Activated CD8-positive, alpha-beta memory T cell treated with anti-CD3 and anti-CD28 coated beads, Interleukin-2, amount 10 ng/mL, durations not matched to agents 7 days and 5 days (primary cell): ENCODE measurements at regions of chr19 and their contacts with region 1.

Region 1: DNA sequence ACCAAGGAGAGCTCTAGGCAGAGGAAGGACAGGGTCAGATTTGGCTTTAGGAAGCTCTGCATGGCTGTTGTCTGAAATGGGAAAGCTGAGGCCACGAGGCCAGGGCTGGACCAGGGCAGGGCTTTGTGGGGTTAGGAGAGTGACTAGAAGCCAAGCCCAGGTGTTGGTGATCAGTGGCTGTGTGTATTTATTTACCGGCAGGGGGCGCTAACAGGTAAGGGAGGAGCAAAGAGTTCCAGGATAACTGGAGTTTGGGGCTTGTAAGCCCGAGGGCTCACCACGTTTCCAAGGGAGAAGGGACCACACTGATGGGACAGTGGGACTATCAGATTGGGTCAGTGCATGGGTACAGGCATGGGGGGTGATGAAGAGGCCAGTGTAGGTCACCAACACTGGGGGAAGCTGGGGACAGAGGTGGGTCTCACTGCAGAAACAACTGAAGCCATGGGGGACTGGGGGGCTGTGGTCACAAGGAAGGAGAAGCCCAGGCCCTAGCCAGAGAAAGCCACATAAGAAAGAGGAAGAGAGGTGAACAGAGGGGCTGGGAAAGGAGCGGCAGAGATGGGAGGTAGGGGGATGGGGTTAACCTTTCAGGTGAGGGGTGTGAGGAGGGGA is 3.9 kb downstream of the TMEM147 start:
- DNase-seq: peak; percentile 68
- ATAC-seq: no peak
- H3K4me3 Mint-ChIP-seq: no peak overlapping the region
- H3K27ac Mint-ChIP-seq: no peak overlapping the region
- H3K4me1 Mint-ChIP-seq: peaks cover 25% of the 10 kb centered on the region
- H3K27me3 Mint-ChIP-seq: no peaks in the 10 kb centered on the region

Region 2: DNA sequence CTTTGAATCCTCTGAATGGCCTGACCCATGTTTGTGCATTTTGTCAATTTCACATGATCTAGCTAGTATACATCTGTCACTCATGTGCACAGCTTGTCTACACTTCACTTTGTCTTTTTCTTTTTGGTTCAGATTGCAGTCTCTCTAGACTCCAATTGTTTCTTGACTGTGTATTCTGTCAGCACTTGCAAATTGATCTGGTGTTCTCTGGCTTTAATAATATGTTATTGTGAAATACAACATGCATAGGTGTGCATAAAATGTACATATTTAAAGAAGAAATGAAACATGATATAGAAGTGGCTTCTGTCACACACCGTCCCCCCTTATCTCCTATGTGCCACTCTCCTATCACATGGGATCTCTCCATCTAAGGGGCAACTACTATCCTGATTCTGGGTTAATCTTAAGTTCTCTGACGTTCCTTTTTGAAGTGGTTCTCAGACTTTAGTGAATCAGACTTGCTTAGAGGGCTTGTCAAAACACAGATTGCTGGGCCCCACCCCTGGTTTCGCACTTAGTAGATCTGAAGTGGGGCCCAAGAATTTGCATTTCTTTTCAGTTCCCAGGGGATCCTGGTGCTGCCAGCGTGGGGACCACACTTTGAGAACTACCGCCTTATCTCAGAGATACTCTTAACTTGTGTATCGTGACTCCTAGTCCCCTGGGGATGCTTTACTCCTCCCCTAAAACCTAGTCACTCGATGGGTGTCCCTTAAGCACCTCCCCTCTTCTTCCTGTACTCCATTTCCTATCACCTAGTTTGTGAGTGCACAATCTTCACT is 64.8 kb before region 1 on chr19:
- CTCF ChIA-PET with region 1: no interaction called
- DNase-seq: no peak
- ATAC-seq: no peak
- H3K4me3 Mint-ChIP-seq: no peak overlapping the region
- H3K27ac Mint-ChIP-seq: no peak overlapping the region
- H3K4me1 Mint-ChIP-seq: peaks cover 2% of the 10 kb centered on the region
- H3K27me3 Mint-ChIP-seq: peaks cover 23% of the 10 kb centered on the region

Region 3: DNA sequence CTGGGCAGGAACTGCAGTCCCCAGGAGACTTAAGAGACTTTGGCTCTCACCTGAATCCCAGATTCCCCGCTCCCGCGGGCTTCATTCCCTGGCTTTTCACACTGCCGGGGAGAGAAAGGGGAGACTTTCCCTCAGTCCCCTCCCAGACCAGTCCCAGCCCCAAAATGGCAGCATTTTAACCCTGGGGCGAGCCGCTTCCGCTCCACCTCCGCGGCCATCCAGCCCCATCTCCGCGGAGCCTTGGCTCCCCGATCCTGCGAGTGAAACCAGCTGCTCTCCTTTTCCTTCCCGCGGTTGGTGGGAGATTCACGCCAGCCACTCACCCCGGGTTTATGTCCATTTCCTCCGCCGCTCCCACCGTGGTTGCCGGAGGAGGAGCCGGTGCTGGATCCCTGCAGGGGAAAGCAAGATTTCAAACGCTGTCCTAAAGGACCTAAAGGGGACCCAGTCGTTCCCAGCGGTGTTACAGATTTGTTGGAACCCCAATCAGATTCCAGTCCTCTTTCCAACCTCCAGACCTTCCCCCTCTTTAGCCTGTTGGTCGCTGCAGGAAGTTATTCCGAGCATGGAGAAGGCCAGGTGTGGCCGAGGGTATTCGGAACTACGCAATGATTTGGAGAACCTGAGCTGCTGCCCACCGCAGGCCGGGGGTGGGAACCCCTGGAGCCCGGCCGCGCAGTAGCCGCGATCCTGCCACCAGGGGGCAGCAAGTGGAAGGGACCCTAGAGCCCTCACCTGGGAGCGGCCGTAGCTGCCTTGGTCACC is 39.2 kb before region 1 on chr19:
- CTCF ChIA-PET with region 1: interaction called, 11 read pairs
- DNase-seq: peak; percentile 75
- ATAC-seq: peak; percentile 78
- H3K4me3 Mint-ChIP-seq: peak overlapping the region; percentile 22
- H3K27ac Mint-ChIP-seq: no peak overlapping the region
- H3K4me1 Mint-ChIP-seq: peaks cover 14% of the 10 kb centered on the region
- H3K27me3 Mint-ChIP-seq: peaks cover 59% of the 10 kb centered on the region

Region 4: DNA sequence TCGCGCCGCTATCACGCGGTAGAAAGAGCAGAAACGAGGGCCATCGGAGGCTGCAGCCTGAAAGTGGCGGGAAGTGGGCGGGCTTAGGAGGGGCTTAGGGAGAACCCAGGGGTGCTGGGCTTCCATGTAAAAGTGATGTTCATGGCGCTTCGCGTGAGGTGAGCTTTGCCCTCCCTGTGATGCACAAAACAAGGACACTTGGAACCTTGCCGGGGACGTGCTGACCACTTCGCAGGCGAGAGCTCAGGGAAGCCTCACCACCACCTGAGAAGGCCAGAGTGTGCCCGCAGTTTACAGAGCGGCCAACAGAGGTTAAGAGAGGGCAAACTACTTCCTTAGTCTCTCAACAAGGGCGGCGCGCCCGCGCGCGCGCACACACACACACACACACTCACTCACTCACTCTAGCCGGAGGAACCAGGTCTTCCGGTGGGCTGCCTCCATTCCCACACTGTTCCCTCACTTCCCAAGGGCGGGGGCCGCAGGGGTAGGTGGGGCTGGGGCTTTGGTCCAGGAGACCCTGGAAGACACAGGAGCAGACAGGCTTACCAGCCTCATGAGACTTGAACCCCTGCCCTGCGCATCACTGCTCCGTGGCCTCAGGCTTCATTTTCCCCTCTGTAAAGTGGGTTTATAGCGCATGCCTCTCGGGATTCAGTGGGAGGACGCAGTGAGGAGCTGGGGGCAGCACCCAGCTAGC is 15.3 kb before region 1 on chr19:
- CTCF ChIA-PET with region 1: interaction called, 10 read pairs
- DNase-seq: peak; percentile 73
- ATAC-seq: peak; percentile 83
- H3K4me3 Mint-ChIP-seq: peak overlapping the region; percentile 57
- H3K27ac Mint-ChIP-seq: peak overlapping the region; percentile 12
- H3K4me1 Mint-ChIP-seq: peaks cover 16% of the 10 kb centered on the region
- H3K27me3 Mint-ChIP-seq: peaks cover 38% of the 10 kb centered on the region

Region 5: GRCh38 chr19:35612559-35613321 is 63.5 kb after region 1 on chr19 and contains the start of gene HAUS5:
- CTCF ChIA-PET with region 1: interaction called, 11 read pairs
- DNase-seq: peak; percentile 96
- ATAC-seq: peak; percentile 97
- H3K4me3 Mint-ChIP-seq: peak within 1 kb of the TSS; percentile 82
- H3K27ac Mint-ChIP-seq: peak within 1 kb of the TSS; percentile 95
- H3K4me1 Mint-ChIP-seq: peaks cover 42% of the 10 kb centered on the region
- H3K27me3 Mint-ChIP-seq: no peaks in the 10 kb centered on the region
- total RNA-seq, gene HAUS5: 49.0 to 59.2 TPM

Region 6: DNA sequence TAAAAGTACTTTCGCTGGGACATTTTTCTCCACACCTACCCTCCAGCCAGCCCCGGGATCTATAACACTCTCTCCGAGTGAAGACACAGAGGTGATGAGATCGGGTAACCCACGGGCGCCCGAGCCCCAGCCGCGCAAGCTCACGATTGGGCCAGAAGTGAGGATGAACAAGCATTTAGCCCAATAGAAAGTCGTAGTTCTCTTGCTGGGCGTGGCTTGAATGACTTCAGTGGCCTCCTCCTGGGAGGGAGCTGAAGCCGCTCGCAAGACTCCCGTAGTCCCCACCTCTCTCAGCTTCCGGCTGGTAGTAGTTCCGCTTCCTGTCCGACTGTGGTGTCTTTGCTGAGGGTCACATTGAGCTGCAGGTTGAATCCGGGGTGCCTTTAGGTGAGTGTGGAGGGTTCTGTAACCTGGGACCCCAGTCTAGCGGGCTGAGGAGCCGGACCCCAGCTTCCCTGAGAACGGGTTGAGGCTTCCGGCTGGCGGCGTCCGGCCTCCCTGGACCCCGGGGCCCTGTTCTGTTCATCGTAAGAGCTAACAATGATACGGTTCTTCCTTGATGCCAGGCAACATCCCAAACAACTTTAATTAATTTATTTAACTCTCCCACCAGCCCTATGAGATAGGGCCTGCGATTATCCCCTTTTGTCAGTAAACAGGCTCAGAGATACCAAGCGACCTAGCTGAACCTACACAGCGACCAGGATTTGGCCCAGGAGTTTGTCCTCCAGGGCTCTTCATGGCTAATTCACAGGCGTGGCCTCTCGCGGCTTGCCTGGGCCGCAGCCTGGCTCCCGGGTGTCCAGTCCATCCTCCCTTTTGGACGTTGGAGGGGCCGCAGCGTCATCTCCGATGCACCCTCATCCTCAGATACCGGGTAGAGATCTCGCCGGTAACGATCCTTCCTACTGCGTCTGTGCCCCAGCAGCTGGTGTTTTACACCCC is 99.0 kb after region 1 on chr19 and contains the start of gene COX6B1:
- CTCF ChIA-PET with region 1: interaction called, 13 read pairs
- DNase-seq: peak; percentile 98
- ATAC-seq: peak; percentile 72
- H3K4me3 Mint-ChIP-seq: peak within 1 kb of the TSS; percentile 96
- H3K27ac Mint-ChIP-seq: peak within 1 kb of the TSS; percentile 93
- H3K4me1 Mint-ChIP-seq: peaks cover 44% of the 10 kb centered on the region
- H3K27me3 Mint-ChIP-seq: no peaks in the 10 kb centered on the region
- total RNA-seq, gene COX6B1: 394 to 417 TPM